CD14-positive monocyte (primary cell): ENCODE measurements at regions of chr13 and their contacts with region 1.

Region 1: GRCh38 chr13:72727417-72728289 is at the starts of genes BORA and MZT1:
- DNase-seq: peak; percentile 95 to 97 (median 97)
- H3K4me3 ChIP-seq: peak within 1 kb of the TSS; percentile 93 to 97 (median 95)
- H3K4me3 Mint-ChIP-seq: peak within 1 kb of the TSS; percentile 95 to 97
- H3K27ac ChIP-seq: peak within 1 kb of the TSS; percentile 63 to 84
- H3K27ac Mint-ChIP-seq: peak within 1 kb of the TSS; percentile 79 to 95 (median 89)
- H3K4me1 ChIP-seq: peaks cover 19 to 39% of the 10 kb centered on the region in 2 donors
- H3K4me1 Mint-ChIP-seq: peaks cover 33% of the 10 kb centered on the region
- H3K27me3 ChIP-seq: no peaks in the 10 kb centered on the region
- H3K27me3 Mint-ChIP-seq: peaks cover 0 to 2% (median 0%) of the 10 kb centered on the region in 3 donors
- CTCF ChIP-seq: no peak
- polyA plus RNA-seq, gene BORA: 2.1 to 4.7 (median 2.9) TPM
- polyA plus RNA-seq, gene MZT1: 2.5 to 4.9 (median 2.9) TPM

Region 2: DNA sequence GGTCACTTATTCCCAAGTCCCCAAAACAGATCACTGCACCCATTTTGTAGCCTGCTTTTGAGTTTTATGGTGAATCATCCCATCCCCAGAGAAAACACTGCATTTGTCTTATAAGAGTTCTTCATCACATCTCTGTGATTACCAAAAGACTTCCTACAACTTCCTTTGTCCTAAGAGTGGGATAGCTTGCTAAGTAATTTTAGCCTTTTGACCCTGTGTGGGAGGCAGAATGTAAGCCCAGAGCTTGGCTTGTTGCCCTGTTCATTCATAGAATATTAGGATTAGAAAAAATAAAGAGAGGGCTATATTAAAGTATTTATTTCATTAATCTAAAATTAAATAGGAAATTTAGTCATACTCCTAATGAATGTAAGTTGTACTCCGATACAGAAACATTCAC is 213.5 kb before region 1 on chr13:
- intact Hi-C with region 1: no loop called
- DNase-seq: no peak
- H3K4me3 ChIP-seq: no peak overlapping the region
- H3K4me3 Mint-ChIP-seq: no peak overlapping the region
- H3K27ac ChIP-seq: no peak overlapping the region
- H3K27ac Mint-ChIP-seq: no peak overlapping the region
- H3K4me1 ChIP-seq: no peaks in the 10 kb centered on the region
- H3K4me1 Mint-ChIP-seq: no peaks in the 10 kb centered on the region
- H3K27me3 ChIP-seq: no peaks in the 10 kb centered on the region
- H3K27me3 Mint-ChIP-seq: no peaks in the 10 kb centered on the region
- CTCF ChIP-seq: no peak

Region 3: GRCh38 chr13:72781451-72782439 is 54.1 kb after region 1 on chr13 and contains the starts of genes DIS3 and PIBF1:
- intact Hi-C with region 1: loop called (anchors 1 to 5 kb)
- DNase-seq: peak; percentile 96 to 98 (median 96)
- H3K4me3 ChIP-seq: peak within 1 kb of the TSS; percentile 49 to 94 (median 92)
- H3K4me3 Mint-ChIP-seq: peak within 1 kb of the TSS; percentile 98 to 99
- H3K27ac ChIP-seq: peak within 1 kb of the TSS; percentile 21 to 88
- H3K27ac Mint-ChIP-seq: peak within 1 kb of the TSS; percentile 94 to 99 (median 97)
- H3K4me1 ChIP-seq: peaks cover 18 to 40% of the 10 kb centered on the region in 2 donors
- H3K4me1 Mint-ChIP-seq: peaks cover 38% of the 10 kb centered on the region
- H3K27me3 ChIP-seq: no peaks in the 10 kb centered on the region
- H3K27me3 Mint-ChIP-seq: peaks cover 0 to 2% (median 0%) of the 10 kb centered on the region in 3 donors
- CTCF ChIP-seq: no peak
- polyA plus RNA-seq, gene DIS3: 6.7 to 11.3 (median 8.4) TPM
- polyA plus RNA-seq, gene PIBF1: 3.3 to 8.0 (median 4.7) TPM

Region 4: DNA sequence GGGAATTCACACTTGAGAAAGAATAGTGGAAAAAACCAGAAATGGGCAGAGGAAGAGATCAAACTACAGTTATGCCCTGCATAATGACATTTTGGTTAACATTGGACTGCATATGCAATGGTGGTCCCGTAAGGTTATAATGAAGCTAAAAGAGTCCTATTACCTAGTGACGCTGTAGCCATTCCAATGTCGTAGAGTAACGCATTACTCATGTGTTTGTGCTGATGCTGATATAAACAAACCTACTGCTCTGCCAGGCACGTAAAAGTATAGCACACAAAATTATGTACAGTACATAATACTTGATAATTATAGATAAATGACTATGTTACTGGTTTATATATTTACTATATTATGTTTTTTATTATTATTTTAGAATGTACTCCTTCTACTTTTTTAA is 452.3 kb after region 1 on chr13:
- intact Hi-C with region 1: no loop called
- DNase-seq: no peak
- H3K4me3 ChIP-seq: no peak overlapping the region
- H3K4me3 Mint-ChIP-seq: no peak overlapping the region
- H3K27ac ChIP-seq: no peak overlapping the region
- H3K27ac Mint-ChIP-seq: no peak overlapping the region
- H3K4me1 ChIP-seq: no peaks in the 10 kb centered on the region
- H3K4me1 Mint-ChIP-seq: no peaks in the 10 kb centered on the region
- H3K27me3 ChIP-seq: no peaks in the 10 kb centered on the region
- H3K27me3 Mint-ChIP-seq: no peaks in the 10 kb centered on the region
- CTCF ChIP-seq: no peak